Activated naive CD4-positive, alpha-beta T cell treated with anti-CD3 and anti-CD28 coated beads for 36 hours (primary cell): ENCODE measurements at regions of chrX and their contacts with region 1.

Region 1: GRCh38 chrX:131677655-131678628 is 134.1 kb downstream of the OR13H1 start:
- DNase-seq: peak; percentile 47
- H3K4me3 Mint-ChIP-seq: no peak overlapping the region
- H3K27ac Mint-ChIP-seq: no peak overlapping the region
- H3K4me1 Mint-ChIP-seq: no peaks in the 10 kb centered on the region
- H3K27me3 Mint-ChIP-seq: no peaks in the 10 kb centered on the region

Region 2: DNA sequence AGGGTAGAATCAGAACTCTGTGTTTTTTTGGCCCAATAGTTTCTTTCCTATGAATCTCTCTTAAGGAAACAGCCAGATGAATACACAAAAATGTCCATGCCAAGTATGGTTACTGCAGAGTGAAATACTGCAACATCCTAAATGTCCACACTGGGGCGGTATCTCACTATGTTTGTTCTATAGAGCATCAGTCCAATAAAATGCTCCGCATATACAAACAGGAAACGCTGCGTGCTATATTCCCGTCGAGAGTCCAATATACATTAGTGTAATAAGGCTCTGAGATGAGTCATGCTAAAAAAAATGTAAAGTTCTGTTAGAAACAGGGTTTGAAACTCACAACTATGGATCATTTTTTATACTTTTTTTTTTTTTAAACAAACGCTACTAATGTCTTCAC is 702.0 kb before region 1 on chrX:
- CTCF ChIA-PET with region 1: interaction called, 4 read pairs
- intact Hi-C with region 1: loop called (anchors 1 kb)
- DNase-seq: peak; percentile 57
- H3K4me3 Mint-ChIP-seq: no peak overlapping the region
- H3K27ac Mint-ChIP-seq: no peak overlapping the region
- H3K4me1 Mint-ChIP-seq: no peaks in the 10 kb centered on the region
- H3K27me3 Mint-ChIP-seq: no peaks in the 10 kb centered on the region

Region 3: DNA sequence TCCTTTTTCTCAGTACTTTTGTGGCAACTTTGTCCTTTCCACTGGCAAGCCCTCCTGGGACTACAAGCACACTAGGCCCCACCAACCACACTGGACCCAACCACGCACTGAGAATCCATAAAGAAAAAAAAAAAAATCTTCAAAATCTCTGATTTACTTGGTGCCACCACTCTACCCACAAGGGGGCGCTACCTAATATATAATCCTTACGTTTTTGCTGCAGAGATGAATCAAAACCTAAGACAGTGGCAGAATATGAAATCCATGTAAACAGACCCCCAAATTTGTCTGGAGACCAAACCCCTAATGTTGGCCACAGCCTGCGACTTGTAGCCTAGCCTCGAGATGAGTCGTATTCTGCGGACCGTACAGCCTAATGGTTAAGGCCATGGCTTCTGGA is 683.3 kb before region 1 on chrX:
- CTCF ChIA-PET with region 1: no interaction called
- intact Hi-C with region 1: loop called (anchors 5 kb)
- DNase-seq: peak; percentile 37
- H3K4me3 Mint-ChIP-seq: no peak overlapping the region
- H3K27ac Mint-ChIP-seq: no peak overlapping the region
- H3K4me1 Mint-ChIP-seq: no peaks in the 10 kb centered on the region
- H3K27me3 Mint-ChIP-seq: peaks cover 11% of the 10 kb centered on the region

Region 4: DNA sequence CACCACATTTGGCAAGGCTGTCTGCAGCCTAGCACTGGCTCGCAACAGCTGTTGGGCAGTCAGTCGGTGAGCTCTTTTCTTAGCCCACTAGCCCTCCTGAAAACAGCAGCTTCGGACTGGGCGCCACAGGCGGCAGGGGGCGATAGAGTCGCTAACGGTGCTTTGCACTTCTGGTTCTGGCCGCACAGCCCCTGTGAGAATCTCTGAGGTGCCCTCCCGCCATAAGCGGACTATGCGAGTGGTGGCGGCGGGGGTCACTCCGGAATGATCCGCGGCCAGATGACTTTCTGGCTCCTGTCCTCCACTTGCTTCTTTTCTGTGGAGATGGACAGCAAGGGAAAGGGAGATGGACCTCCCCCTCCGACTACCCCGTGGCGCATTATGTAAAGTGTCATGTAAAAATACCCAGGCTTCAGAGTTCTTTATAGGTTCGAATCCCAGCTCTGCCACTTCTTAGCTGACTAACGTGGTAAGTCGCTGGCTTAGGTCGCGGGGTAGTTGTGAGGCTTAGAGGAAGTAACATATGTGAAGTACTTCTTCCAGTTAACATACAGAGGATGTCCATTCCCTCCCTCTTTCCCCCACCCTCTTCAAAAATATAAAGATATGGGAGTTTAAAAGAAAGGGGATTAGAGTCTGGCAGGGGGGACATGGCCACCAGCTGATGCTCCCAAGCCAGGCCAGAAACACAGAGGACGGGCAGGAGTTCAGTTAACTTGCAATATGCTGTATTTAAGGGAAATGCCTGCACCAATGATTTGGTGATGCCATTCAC is 608.8 kb before region 1 on chrX:
- CTCF ChIA-PET with region 1: no interaction called
- intact Hi-C with region 1: loop called (anchors 10 kb)
- DNase-seq: peak; percentile 28
- H3K4me3 Mint-ChIP-seq: no peak overlapping the region
- H3K27ac Mint-ChIP-seq: no peak overlapping the region
- H3K4me1 Mint-ChIP-seq: peaks cover 2% of the 10 kb centered on the region
- H3K27me3 Mint-ChIP-seq: peaks cover 37% of the 10 kb centered on the region